Activated B cell treated with CpG ODN at 0.5 μM for 24 hours (primary cell): ENCODE measurements at regions of chr7 and their contacts with region 1.

Region 1: GRCh38 chr7:28272461-28272877 is 91.9 kb upstream of the JAZF1 start:
- DNase-seq: peak; percentile 30
- ATAC-seq: peak; percentile 64
- H3K4me3 Mint-ChIP-seq: peak overlapping the region; percentile 79
- H3K27ac Mint-ChIP-seq: no peak overlapping the region
- H3K4me1 Mint-ChIP-seq: peaks cover 27% of the 10 kb centered on the region
- H3K27me3 Mint-ChIP-seq: no peaks in the 10 kb centered on the region
- CTCF ChIP-seq: no peak

Region 2: DNA sequence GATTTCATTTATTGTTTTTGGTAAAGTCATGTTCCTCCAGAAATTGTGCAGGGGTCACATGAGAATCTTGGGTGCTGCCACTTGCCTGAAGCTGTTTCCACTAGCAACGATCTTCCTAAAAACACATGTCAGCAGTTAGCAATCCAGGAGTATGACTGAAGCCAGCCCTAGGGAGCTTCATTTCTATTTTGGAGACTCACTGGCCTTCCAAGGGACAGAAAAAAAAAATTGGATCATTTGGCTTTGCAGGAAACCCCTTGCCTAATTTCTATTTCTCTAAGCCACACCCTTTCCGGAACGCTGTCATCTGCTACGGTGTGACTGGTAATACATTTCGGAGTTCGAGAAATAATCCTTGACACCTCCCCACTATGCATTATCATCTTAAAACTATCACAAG is 327.8 kb before region 1 on chr7:
- CTCF ChIA-PET with region 1: no interaction called
- POLR2A ChIA-PET with region 1: no interaction called
- intact Hi-C with region 1: no loop called
- DNase-seq: no peak
- ATAC-seq: no peak
- H3K4me3 Mint-ChIP-seq: no peak overlapping the region
- H3K27ac Mint-ChIP-seq: no peak overlapping the region
- H3K4me1 Mint-ChIP-seq: peaks cover 2% of the 10 kb centered on the region
- H3K27me3 Mint-ChIP-seq: no peaks in the 10 kb centered on the region
- CTCF ChIP-seq: no peak

Region 3: DNA sequence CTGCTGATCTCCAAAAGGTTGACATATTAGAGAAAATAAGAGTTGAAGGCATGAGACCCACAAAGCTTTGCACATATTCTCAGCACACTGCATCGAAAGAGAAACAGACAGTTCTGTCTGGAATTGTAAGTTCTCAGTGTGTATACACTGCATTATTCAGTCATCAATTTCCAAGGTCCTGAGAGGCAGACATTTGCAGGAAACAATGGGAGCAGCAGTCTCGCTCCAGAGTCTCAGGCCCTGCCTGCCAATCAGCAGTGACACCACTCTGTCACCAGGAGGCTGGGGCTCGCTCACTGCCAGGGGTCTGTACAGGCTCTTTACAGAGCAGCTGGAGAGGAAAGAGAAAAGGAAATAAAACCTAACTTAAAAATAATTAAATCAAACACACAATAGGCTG is 128.2 kb before region 1 on chr7:
- CTCF ChIA-PET with region 1: no interaction called
- POLR2A ChIA-PET with region 1: no interaction called
- intact Hi-C with region 1: loop called (anchors 1 kb)
- DNase-seq: no peak
- ATAC-seq: peak; percentile 76
- H3K4me3 Mint-ChIP-seq: no peak overlapping the region
- H3K27ac Mint-ChIP-seq: no peak overlapping the region
- H3K4me1 Mint-ChIP-seq: peaks cover 61% of the 10 kb centered on the region
- H3K27me3 Mint-ChIP-seq: no peaks in the 10 kb centered on the region
- CTCF ChIP-seq: no peak

Region 4: DNA sequence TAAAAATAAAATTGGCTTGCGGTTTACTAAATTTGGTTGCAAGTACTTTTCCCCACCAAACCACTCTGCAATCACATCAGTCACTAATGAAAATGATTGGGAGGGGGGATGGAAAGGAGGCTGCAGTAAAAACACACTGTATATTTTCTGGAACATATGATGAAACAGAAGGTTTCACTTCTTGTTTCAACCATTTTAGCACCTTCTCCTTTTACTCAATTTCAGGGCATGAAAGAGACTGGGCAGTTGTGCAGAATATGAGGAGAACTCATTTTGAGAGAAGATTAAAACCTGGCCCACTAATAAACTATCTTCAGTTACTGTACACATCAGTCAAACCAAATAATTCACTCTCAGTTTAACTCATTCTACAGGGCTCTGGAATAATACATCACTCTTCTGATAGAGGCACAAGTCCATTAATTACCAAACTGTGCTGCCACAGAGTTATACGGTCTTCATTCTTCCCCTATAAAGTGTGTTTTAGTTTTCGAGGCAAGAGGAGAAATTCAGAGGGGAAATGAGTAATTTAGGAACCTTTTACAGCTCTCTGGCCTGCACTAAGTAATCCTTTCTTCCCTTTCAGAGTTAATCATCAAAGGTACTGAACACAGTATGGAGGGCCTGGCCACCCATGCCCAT is 117.3 kb before region 1 on chr7:
- CTCF ChIA-PET with region 1: no interaction called
- POLR2A ChIA-PET with region 1: interaction called, 4 read pairs
- intact Hi-C with region 1: loop called (anchors 1 kb)
- DNase-seq: no peak
- ATAC-seq: peak; percentile 68
- H3K4me3 Mint-ChIP-seq: peak overlapping the region; percentile 68
- H3K27ac Mint-ChIP-seq: peak overlapping the region; percentile 94
- H3K4me1 Mint-ChIP-seq: peaks cover 95% of the 10 kb centered on the region
- H3K27me3 Mint-ChIP-seq: no peaks in the 10 kb centered on the region
- CTCF ChIP-seq: no peak

Region 5: DNA sequence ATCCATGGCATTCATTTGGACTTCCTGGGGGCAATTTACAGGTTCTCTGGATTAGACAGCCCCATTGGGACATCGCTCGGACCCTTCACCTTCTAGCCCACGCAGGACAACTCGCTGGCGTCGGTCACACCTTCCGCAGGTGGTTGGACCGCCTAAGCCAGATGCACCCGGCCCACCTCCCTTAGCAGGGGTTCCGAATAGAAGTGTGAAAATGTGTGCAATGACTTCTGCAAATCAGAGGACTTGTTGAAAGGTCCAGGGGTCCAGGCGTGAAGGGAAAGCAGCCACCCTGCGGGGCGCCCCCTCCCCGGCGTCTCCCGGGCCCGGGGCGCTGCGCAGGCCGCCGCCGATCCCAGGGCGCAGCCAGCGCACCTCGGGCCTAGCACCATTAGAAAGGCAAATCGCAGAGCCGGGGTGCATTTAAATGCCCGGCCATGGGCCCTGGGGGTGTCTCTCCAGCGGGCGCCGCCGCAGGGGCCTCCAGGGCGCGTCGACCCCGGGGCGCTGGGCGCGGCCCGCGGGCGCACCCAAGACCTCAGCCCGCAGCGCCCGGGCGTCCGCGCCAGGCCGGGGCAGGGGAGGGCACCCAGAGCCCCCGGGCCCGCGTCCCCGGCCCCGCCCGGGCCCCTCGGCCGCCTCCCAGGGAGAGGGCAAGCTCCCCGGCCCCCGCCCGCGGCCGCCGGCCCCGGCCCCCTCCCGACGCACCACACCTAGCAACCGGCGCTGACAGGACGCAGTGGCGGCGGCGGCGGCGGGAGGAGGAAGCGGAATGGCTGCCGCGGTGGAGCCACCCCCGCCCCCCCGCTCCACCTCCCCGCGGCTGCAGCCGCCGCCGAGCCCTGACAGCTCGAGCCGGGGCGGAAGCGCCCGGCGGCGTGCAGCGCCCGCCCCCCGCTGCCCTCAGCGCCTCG is 93.1 kb before region 1 on chr7:
- CTCF ChIA-PET with region 1: interaction called, 3 read pairs
- POLR2A ChIA-PET with region 1: interaction called, 5 read pairs
- intact Hi-C with region 1: loop called (anchors 1 kb)
- DNase-seq: peak; percentile 73
- ATAC-seq: peak; percentile 59
- H3K4me3 Mint-ChIP-seq: peak overlapping the region; percentile 80
- H3K27ac Mint-ChIP-seq: peak overlapping the region; percentile 84
- H3K4me1 Mint-ChIP-seq: peaks cover 77% of the 10 kb centered on the region
- H3K27me3 Mint-ChIP-seq: no peaks in the 10 kb centered on the region
- CTCF ChIP-seq: no peak

Region 6: DNA sequence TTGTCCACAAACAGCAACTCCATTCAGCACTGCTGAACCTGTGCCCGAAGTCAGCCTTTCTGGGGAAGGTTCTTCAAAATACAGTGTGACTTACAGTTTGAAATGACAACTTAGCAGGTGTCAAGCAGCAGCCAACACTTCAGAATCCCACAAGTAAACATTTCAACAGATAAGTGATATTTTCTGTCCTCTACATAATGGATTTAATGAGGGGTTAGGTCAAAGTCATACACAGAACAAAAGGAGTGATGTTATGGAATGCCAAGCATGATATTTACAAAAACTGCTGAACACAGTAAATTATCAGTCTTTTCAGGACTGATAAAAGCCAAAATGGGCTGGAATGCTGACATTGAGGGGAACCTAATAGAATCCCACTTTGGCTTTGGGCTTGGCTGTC is 14.2 kb before region 1 on chr7:
- CTCF ChIA-PET with region 1: no interaction called
- POLR2A ChIA-PET with region 1: no interaction called
- intact Hi-C with region 1: no loop called
- DNase-seq: no peak
- ATAC-seq: no peak
- H3K4me3 Mint-ChIP-seq: no peak overlapping the region
- H3K27ac Mint-ChIP-seq: no peak overlapping the region
- H3K4me1 Mint-ChIP-seq: no peaks in the 10 kb centered on the region
- H3K27me3 Mint-ChIP-seq: peaks cover 5% of the 10 kb centered on the region
- CTCF ChIP-seq: no peak

Region 7: GRCh38 chr7:28292834-28293526 is 20.5 kb after region 1 on chr7:
- CTCF ChIA-PET with region 1: no interaction called
- POLR2A ChIA-PET with region 1: no interaction called
- intact Hi-C with region 1: loop called (anchors 1 kb)
- DNase-seq: no peak
- ATAC-seq: no peak
- H3K4me3 Mint-ChIP-seq: no peak overlapping the region
- H3K27ac Mint-ChIP-seq: no peak overlapping the region
- H3K4me1 Mint-ChIP-seq: peaks cover 52% of the 10 kb centered on the region
- H3K27me3 Mint-ChIP-seq: no peaks in the 10 kb centered on the region
- CTCF ChIP-seq: no peak

Region 8: DNA sequence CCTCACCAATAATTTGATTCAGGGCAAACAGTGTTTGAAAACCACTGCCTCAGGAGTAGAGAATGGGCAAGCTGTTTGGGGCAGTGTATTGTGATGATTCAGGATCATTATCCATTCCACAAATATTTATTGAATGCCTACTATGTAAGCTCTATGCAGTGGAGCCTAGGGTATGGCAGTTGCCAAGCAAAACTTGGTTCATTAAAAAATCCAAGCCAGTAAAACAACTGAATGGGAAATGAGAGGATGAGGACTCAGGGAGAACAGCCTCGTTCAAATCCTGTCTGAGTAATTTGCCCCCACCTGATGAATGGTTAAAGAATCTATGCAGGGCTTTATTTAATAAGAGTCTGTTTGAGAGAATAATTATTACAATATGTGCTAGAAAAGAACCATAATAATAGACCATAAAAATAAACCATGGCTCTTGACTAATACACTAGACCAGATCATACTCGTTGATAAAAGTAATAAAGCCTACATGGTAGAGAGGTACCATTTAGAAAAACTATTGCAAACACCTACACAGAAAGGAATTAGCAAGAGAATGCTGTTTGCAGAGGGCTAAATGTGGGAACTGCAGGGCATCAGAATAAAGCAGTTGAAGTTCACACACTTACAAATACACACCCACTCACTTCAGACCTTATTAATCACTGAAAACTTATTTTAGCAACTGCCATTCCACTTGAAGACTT is 211.6 kb after region 1 on chr7:
- CTCF ChIA-PET with region 1: no interaction called
- POLR2A ChIA-PET with region 1: no interaction called
- intact Hi-C with region 1: no loop called
- DNase-seq: no peak
- ATAC-seq: no peak
- H3K4me3 Mint-ChIP-seq: no peak overlapping the region
- H3K27ac Mint-ChIP-seq: no peak overlapping the region
- H3K4me1 Mint-ChIP-seq: peaks cover 17% of the 10 kb centered on the region
- H3K27me3 Mint-ChIP-seq: peaks cover 2% of the 10 kb centered on the region
- CTCF ChIP-seq: no peak